Heart left ventricle (tissue), 16 donors: ENCODE measurements at regions of chr6 and their contacts with region 1.

Region 1: DNA sequence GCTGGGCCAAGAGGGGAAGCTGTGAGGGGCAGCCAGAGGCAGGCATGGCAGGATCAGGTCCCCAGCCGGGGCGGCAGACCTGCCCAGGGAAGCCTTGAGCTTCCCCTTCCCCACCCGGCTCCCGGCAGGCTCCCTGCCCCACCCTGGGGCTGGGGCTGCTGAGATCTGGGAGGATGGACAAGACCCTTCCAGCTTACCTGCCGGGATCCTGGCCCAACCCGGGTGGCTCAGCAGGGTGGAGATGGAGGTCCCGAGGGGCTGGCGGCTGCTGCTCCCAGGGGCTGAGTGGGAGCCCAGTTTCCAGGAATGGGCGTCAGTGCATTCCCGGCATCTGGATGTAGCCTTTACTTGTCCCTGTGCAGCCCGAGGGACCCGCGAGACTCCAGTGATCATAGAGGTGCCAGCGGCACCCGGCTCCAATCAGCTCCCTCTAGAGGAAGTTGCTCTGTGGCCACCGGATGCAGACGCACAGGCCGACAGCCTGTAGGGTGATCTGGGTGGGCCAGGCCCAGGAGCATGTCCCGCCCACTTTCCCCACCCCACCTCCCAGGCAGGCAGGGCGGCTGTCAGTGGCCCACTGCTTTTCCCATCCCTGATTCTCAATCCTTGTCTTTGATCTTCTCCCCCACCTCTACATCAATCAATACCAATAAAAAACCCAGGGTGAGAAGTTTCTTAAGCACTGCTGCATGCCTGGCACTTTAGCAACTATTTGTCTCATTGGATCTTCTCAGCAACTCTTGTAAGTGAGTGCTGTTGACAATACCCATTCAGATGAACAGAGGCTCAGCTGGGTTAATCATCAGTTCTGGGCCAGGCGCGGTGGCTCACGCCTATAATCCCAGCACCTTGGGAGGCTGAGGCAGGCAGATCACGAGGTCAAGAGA is at the start of gene BAK1:
- DNase-seq: peak; percentile 93 to 95 (median 94)
- ATAC-seq: peak; percentile 95 to 96 (median 96)
- H3K4me3 ChIP-seq: peak within 1 kb of the TSS; percentile 50 to 97 (median 78)
- H3K27ac ChIP-seq: peak within 1 kb of the TSS; percentile 78 to 91 (median 86)
- H3K4me1 ChIP-seq: peaks cover 0 to 40% (median 30%) of the 10 kb centered on the region in 12 donors
- H3K27me3 ChIP-seq: no peaks in the 10 kb centered on the region
- CTCF ChIP-seq: peak; percentile 20 to 79 (median 56)
- POLR2A ChIP-seq: peak in 1 of 2 donors; percentile 82
- total RNA-seq, gene BAK1: 13.9 to 33.4 (median 18.9) TPM

Region 2: GRCh38 chr6:33417903-33418689 is 162.0 kb before region 1 on chr6 and contains the start of gene CUTA:
- intact Hi-C with region 1: loop called in 4 of 10 experiments (anchors 10 kb)
- DNase-seq: peak; percentile 100
- ATAC-seq: peak; percentile 94 to 97 (median 96)
- H3K4me3 ChIP-seq: peak within 1 kb of the TSS; percentile 30 to 80 (median 65)
- H3K27ac ChIP-seq: peak within 1 kb of the TSS; percentile 83 to 97 (median 92)
- H3K4me1 ChIP-seq: peaks cover 0 to 40% (median 25%) of the 10 kb centered on the region in 12 donors
- H3K27me3 ChIP-seq: no peaks in the 10 kb centered on the region
- CTCF ChIP-seq: peak in 11 of 12 donors; percentile 23 to 64 (median 50)
- POLR2A ChIP-seq: peak in 1 of 2 donors; percentile 63
- total RNA-seq, gene CUTA: 99.3 to 142 (median 120) TPM

Region 3: DNA sequence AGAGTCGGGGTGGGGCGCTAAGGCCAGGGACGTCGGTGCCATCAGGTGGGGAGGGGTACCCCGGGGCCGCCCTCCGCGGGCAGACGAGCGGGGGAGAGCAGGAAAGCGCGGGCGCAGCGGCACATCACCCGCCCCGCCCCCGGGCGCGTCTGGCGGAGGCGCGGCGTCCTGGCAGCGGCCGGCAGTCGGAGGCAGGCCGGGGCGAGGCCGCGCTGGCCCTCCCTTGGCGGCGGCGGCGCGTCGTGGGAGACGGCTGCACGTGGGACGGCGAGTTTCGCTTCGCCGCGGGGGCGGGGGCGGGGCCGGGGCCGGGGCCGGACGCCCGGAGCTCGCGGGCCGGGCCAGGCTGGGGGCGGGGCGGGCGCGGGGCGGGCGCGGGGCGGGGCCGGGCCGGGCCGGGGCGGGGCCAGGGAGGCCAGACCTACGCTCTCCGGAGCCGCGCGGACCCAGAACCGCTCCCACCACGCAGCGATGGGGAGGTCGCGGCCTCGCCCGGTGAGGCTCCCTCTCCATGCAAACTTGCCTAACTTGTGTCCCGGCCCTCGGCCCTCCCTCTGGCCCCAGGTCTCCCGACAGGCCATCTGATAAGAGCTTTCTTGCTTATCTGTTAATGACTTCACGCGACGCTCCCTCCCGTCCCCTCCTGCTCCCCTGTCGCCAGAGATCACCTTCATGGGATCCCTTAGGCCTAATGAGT is 53.5 kb after region 1 on chr6:
- intact Hi-C with region 1: loop called in 5 of 10 experiments (anchors 5 to 10 kb)
- DNase-seq: peak; percentile 72 to 84 (median 79)
- ATAC-seq: peak; percentile 71 to 87 (median 86)
- H3K4me3 ChIP-seq: peak overlapping the region in 11 of 12 donors; percentile 23 to 58 (median 47)
- H3K27ac ChIP-seq: peak overlapping the region in 10 of 12 donors; percentile 0 to 72 (median 42)
- H3K4me1 ChIP-seq: peaks cover 0 to 32% (median 22%) of the 10 kb centered on the region in 12 donors
- H3K27me3 ChIP-seq: peaks cover 0 to 6% (median 0%) of the 10 kb centered on the region in 9 donors
- CTCF ChIP-seq: no peak
- POLR2A ChIP-seq: no peak

Region 4: GRCh38 chr6:33771146-33772081 is 191.3 kb after region 1 on chr6:
- intact Hi-C with region 1: loop called in 2 of 10 experiments (anchors 5 to 10 kb)
- DNase-seq: peak; percentile 65 to 88 (median 75)
- ATAC-seq: peak; percentile 44 to 85 (median 76)
- H3K4me3 ChIP-seq: peak overlapping the region in 4 of 12 donors; percentile 8 to 28 (median 18)
- H3K27ac ChIP-seq: peak overlapping the region in 11 of 12 donors; percentile 2 to 74 (median 50)
- H3K4me1 ChIP-seq: peaks cover 0 to 37% (median 27%) of the 10 kb centered on the region in 12 donors
- H3K27me3 ChIP-seq: no peaks in the 10 kb centered on the region
- CTCF ChIP-seq: peak; percentile 92 to 99 (median 97)
- POLR2A ChIP-seq: no peak

Region 5: DNA sequence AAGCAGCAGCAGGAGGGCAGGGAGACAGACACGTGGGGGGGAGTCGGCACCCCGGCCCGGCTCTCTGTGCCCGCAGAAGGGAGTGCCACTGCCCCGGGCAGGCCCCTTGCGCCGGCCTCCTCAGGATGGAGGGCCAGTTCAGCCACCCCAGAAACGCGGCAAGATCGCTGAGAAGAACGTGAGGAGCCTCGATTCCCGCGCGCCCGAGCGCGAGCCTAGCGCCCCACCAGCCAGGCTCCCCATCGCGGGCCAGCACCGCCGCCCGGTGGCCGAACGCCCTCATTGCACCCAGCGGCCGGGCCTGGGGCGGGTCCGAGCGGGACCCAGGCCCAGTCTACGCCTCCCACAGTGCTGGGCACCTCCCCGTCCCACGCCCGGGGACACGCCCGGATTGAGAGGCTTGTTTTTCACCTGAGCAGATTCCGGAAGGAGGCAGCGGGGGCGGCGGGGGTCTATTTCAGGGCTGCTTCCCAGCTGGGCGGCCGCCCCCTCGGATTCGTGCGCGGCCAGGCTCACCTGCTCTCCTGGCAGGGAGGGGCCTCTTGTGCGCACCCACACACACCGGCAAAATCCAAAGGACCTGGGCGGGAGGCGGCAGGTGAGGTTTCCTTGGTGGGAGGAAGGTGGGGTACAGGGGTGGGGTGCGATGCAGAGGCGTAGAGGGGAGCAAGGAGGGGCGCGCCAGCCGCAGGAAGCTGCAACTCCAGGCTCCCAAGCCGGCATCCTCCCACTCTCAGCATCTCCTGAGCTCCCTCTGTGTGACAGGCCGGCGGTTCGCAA is 574.8 kb after region 1 on chr6:
- intact Hi-C with region 1: loop called in 6 of 10 experiments (anchors 5 to 10 kb)
- DNase-seq: peak in 4 of 5 donors; percentile 31 to 79 (median 48)
- ATAC-seq: peak; percentile 22 to 86 (median 75)
- H3K4me3 ChIP-seq: peak overlapping the region in 6 of 12 donors; percentile 5 to 30 (median 20)
- H3K27ac ChIP-seq: no peak overlapping the region
- H3K4me1 ChIP-seq: peaks cover 0 to 11% (median 5%) of the 10 kb centered on the region in 12 donors
- H3K27me3 ChIP-seq: peaks cover 12 to 62% (median 55%) of the 10 kb centered on the region in 9 donors
- CTCF ChIP-seq: peak; percentile 92 to 98 (median 96)
- POLR2A ChIP-seq: no peak